ENCODE measurements at regions of chr19 and their contacts with region 1.

Region 1: DNA sequence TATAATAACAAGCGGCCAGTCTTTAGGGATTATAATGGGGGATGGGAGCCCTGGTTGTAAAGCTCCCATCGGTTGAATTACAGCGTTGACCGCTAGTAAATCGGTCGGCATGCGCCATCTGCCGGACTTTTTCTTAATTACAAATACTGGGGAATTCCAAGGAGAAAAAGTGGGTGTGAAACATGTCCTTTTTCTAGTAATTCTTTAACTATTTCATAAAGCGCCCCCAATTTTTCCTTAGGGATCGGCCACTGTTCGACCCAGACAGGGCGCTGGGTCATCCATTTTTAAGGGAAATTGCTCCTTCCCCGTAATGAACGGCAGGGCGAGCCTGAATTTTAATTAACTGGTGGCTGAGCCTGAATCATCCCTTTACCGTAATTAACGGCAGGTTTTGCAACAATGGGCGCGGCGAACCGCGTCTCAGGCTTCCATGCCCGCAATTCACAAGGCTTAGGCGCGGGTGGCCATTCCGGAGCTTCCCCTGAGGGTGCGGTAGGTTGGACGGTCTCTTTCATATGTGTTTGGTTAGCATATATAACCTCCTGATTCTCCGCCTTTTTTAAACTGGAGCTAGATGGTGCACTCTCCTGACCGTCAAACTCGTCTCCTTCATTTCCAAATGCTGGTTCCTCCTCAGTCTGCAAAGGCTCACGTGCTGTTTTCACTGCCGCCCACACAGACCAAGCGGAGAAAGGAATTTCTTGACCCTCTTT is 30.2 kb upstream of the EVI5L start:
- DNase-seq: peak; percentile 73
- ATAC-seq: peak; percentile 63
- H3K4me3 Mint-ChIP-seq: peak overlapping the region; percentile 21
- H3K27ac Mint-ChIP-seq: no peak overlapping the region
- H3K4me1 Mint-ChIP-seq: peaks cover 8% of the 10 kb centered on the region
- H3K27me3 Mint-ChIP-seq: peaks cover 32% of the 10 kb centered on the region

Region 2: GRCh38 chr19:7348587-7349230 is 451.1 kb before region 1 on chr19 and contains the start of gene ARHGEF18:
- CTCF ChIA-PET with region 1: no interaction called
- POLR2A ChIA-PET with region 1: no interaction called
- intact Hi-C with region 1: loop called in 1 of 2 experiments (anchors 5 kb)
- DNase-seq: peak; percentile 75
- ATAC-seq: peak; percentile 71
- H3K4me3 Mint-ChIP-seq: peak within 1 kb of the TSS; percentile 84
- H3K27ac Mint-ChIP-seq: peak within 1 kb of the TSS; percentile 90
- H3K4me1 Mint-ChIP-seq: peaks cover 60% of the 10 kb centered on the region
- H3K27me3 Mint-ChIP-seq: no peaks in the 10 kb centered on the region
- total RNA-seq, gene ARHGEF18: 36.6 to 39.3 TPM

Region 3: GRCh38 chr19:7575434-7576040 is 224.3 kb before region 1 on chr19:
- CTCF ChIA-PET with region 1: no interaction called
- POLR2A ChIA-PET with region 1: no interaction called
- intact Hi-C with region 1: loop called in 1 of 2 experiments (anchors 1 kb)
- DNase-seq: peak; percentile 31
- ATAC-seq: peak; percentile 51
- H3K4me3 Mint-ChIP-seq: no peak overlapping the region
- H3K27ac Mint-ChIP-seq: no peak overlapping the region
- H3K4me1 Mint-ChIP-seq: no peaks in the 10 kb centered on the region
- H3K27me3 Mint-ChIP-seq: peaks cover 2% of the 10 kb centered on the region

Region 4: GRCh38 chr19:7652061-7652641 is 147.6 kb before region 1 on chr19:
- CTCF ChIA-PET with region 1: interaction called, 24 read pairs
- POLR2A ChIA-PET with region 1: no interaction called
- intact Hi-C with region 1: loop called (anchors 1 to 2 kb)
- DNase-seq: peak; percentile 92
- ATAC-seq: peak; percentile 85
- H3K4me3 Mint-ChIP-seq: peak overlapping the region; percentile 37
- H3K27ac Mint-ChIP-seq: peak overlapping the region; percentile 61
- H3K4me1 Mint-ChIP-seq: peaks cover 17% of the 10 kb centered on the region
- H3K27me3 Mint-ChIP-seq: no peaks in the 10 kb centered on the region

Region 5: DNA sequence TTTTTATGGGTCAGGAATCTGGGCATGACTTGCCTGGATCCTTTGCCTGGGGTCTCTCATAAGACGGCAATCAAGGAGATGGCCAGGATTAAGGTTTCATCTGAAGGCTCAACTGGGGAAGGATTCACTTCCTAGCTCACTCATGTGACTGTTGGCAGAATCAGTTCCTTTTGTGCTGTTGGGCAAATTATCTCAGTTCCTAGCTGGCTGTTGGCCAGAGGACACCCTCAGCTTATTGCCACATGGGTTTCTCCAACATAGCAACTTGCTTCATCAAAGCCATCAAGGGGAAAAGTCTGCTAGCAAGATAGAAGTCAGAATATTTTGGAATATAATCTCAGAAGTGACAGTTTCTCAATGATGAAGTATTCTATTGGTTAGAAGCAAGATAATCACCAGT is 18.0 kb after region 1 on chr19:
- CTCF ChIA-PET with region 1: interaction called, 11 read pairs
- POLR2A ChIA-PET with region 1: no interaction called
- intact Hi-C with region 1: no loop called
- DNase-seq: no peak
- ATAC-seq: no peak
- H3K4me3 Mint-ChIP-seq: no peak overlapping the region
- H3K27ac Mint-ChIP-seq: no peak overlapping the region
- H3K4me1 Mint-ChIP-seq: peaks cover 11% of the 10 kb centered on the region
- H3K27me3 Mint-ChIP-seq: peaks cover 27% of the 10 kb centered on the region

Measured in activated CD4-positive, alpha-beta T cell treated with anti-CD3 and anti-CD28 coated beads for 36 hours (primary cell).